ENCODE measurements at regions of chr2 and their contacts with region 1.

Region 1: GRCh38 chr2:241149925-241150659 is at the start of gene PPP1R7:
- DNase-seq: peak; percentile 94
- ATAC-seq: peak; percentile 87
- H3K4me3 ChIP-seq: peak within 1 kb of the TSS; percentile 83 to 96 (median 91)
- H3K27ac ChIP-seq: peak within 1 kb of the TSS; percentile 36
- H3K4me1 ChIP-seq: peaks cover 25% of the 10 kb centered on the region
- H3K27me3 ChIP-seq: no peaks in the 10 kb centered on the region; a peak in 1 of 5 replicates
- CTCF ChIP-seq: peak; percentile 70
- EP300 ChIP-seq: no peak; a peak in 1 of 4 replicates
- POLR2A ChIP-seq: peak; percentile 72 to 90
- RAD21 ChIP-seq: peak; percentile 84
- total RNA-seq, gene PPP1R7: 67.9 and 77.2 TPM in 2 replicates

Region 2: DNA sequence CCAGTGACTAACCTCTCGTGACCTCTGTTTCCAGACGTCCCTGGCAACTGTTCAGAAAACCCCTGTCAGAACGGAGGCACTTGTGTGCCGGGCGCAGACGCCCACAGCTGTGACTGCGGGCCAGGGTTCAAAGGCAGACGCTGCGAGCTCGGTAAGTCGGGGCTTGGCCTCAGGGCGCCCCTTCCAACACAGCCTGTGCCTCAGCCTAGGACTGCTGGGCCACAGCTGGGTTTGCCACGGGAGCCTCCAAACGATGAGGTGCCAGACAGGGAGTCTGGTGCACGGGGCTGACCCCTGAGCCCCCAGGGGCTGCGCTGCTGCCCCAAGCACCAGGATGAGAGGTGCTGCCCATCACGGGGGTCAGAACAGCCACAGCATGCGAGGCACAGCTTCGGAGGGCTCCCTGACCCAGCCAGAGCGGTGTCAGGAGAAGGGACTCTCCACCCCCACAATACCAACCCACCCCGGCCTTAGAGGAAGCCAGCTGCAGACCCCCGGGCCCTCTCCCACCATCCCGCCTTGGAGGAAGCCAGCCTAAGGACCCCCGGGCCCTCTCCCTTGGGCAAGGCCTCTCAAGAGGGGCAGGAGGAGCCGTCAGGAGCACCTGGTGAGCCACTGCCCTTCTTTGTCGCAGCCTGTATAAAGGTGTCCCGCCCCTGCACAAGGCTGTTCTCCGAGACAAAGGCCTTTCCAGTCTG is 68.3 kb before region 1 on chr2:
- CTCF ChIA-PET with region 1: interaction called, 9 read pairs
- POLR2A ChIA-PET with region 1: interaction called, 4 read pairs
- in situ Hi-C with region 1: no loop called
- intact Hi-C with region 1: loop called (anchors 1 kb)
- DNase-seq: no peak
- ATAC-seq: peak; percentile 59
- H3K4me3 ChIP-seq: peak overlapping the region in 1 of 3 experiments; percentile 49; a peak in 1 of 6 replicates
- H3K27ac ChIP-seq: no peak overlapping the region
- H3K4me1 ChIP-seq: peaks cover 28% of the 10 kb centered on the region
- H3K27me3 ChIP-seq: no peaks in the 10 kb centered on the region
- CTCF ChIP-seq: no peak
- EP300 ChIP-seq: no peak
- POLR2A ChIP-seq: no peak
- RAD21 ChIP-seq: no peak

Region 3: GRCh38 chr2:241092677-241093076 is 57.4 kb before region 1 on chr2:
- CTCF ChIA-PET with region 1: no interaction called
- POLR2A ChIA-PET with region 1: interaction called, 13 read pairs
- in situ Hi-C with region 1: no loop called
- intact Hi-C with region 1: loop called (anchors 1 kb)
- DNase-seq: no peak
- ATAC-seq: peak; percentile 27
- H3K4me3 ChIP-seq: peak overlapping the region in 2 of 3 experiments; percentile 12 to 57; a peak in 3 of 6 replicates
- H3K27ac ChIP-seq: peak overlapping the region; percentile 83
- H3K4me1 ChIP-seq: peaks cover 51% of the 10 kb centered on the region
- H3K27me3 ChIP-seq: no peaks in the 10 kb centered on the region
- CTCF ChIP-seq: no peak
- EP300 ChIP-seq: no peak
- POLR2A ChIP-seq: no peak
- RAD21 ChIP-seq: no peak

Region 4: DNA sequence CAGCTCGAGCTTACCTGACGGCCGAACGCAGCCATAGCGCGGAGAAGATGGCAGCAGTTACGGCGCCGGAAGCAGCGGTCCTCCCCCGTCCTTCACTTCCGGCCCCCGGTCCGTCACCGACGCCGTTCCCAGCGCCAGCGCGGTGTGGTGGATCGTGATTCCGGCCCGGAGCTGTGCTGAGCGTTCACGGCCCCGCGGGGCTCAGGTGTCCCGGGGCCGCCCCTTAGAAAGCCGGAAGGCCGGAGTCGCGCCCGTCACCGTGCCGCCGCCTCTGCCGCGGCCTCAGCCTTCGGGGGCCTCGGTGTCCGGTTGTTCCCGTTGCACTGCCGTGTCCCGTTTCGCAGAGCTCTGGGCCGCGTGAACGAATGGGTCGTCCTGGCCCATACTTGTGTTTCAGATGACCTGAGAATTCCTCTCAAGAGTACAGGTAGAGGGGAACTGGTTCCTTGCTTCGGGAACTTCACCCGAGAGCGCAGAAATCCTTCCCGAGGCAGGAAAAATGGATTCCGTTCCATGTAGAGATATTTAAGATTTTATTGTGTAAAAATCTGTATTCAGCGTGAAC is 47.8 kb before region 1 on chr2 and contains the start of gene MTERF4:
- CTCF ChIA-PET with region 1: no interaction called
- POLR2A ChIA-PET with region 1: interaction called, 21 read pairs
- in situ Hi-C with region 1: no loop called
- intact Hi-C with region 1: loop called (anchors 2 kb)
- DNase-seq: peak; percentile 86
- ATAC-seq: peak; percentile 99
- H3K4me3 ChIP-seq: peak within 1 kb of the TSS; percentile 75 to 96 (median 96)
- H3K27ac ChIP-seq: peak within 1 kb of the TSS; percentile 90
- H3K4me1 ChIP-seq: peaks cover 35% of the 10 kb centered on the region
- H3K27me3 ChIP-seq: no peaks in the 10 kb centered on the region; a peak in 1 of 5 replicates
- CTCF ChIP-seq: peak; percentile 55
- EP300 ChIP-seq: peak; percentile 77 to 81; a peak in 3 of 4 replicates
- POLR2A ChIP-seq: peak; percentile 91 to 96
- RAD21 ChIP-seq: peak; percentile 92
- total RNA-seq, gene MTERF4: 59.8 and 61.5 TPM in 2 replicates

Region 5: GRCh38 chr2:241135737-241136136 is 14.4 kb before region 1 on chr2:
- CTCF ChIA-PET with region 1: no interaction called
- POLR2A ChIA-PET with region 1: interaction called, 15 read pairs
- in situ Hi-C with region 1: no loop called
- intact Hi-C with region 1: no loop called
- DNase-seq: peak; percentile 48
- ATAC-seq: peak; percentile 88
- H3K4me3 ChIP-seq: no peak overlapping the region
- H3K27ac ChIP-seq: peak overlapping the region; percentile 44
- H3K4me1 ChIP-seq: peaks cover 22% of the 10 kb centered on the region
- H3K27me3 ChIP-seq: no peaks in the 10 kb centered on the region
- CTCF ChIP-seq: no peak
- EP300 ChIP-seq: 0 out of 4 replicates have a peak, but pooled peaks of 1 of the 2 experiments have one; percentile 36
- POLR2A ChIP-seq: no peak
- RAD21 ChIP-seq: no peak

Region 6: DNA sequence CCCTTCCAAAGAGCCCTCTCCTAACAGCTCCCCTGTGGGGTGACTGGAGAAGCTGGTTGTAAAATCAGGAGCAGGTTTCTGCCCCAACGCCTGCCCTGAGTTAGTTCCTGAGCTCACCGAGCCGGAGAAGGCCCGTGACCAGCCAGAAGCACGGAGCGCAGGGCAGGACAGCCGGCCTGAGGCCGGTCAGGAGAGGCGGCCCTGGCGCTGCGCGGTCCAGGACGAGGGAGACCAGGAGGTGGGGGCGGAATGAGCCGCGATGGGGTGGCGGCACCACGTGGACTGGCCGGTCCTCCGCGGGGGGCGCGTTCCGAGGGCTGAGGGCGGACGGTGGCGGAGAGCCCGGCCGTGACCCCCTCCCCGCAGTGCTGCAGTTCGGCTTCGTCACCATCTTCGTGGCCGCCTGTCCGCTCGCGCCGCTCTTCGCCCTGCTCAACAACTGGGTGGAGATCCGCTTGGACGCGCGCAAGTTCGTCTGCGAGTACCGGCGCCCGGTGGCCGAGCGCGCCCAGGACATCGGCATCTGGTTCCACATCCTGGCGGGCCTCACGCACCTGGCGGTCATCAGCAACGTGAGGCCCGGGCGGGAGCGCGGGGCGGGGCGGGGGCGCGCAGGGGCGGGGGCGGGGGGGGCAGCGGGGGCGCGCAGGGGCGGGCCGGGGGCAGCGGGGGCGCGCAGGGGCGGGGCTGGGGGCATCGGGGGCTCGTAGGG is 67.4 kb after region 1 on chr2:
- CTCF ChIA-PET with region 1: no interaction called
- POLR2A ChIA-PET with region 1: interaction called, 5 read pairs
- in situ Hi-C with region 1: no loop called
- intact Hi-C with region 1: loop called (anchors 1 kb)
- DNase-seq: peak; percentile 80
- ATAC-seq: peak; percentile 75
- H3K4me3 ChIP-seq: peak overlapping the region; percentile 50 to 76 (median 74)
- H3K27ac ChIP-seq: peak overlapping the region; percentile 79
- H3K4me1 ChIP-seq: peaks cover 64% of the 10 kb centered on the region
- H3K27me3 ChIP-seq: peaks cover 4 to 21% of the 10 kb centered on the region in 2 experiments; a peak in 3 of 5 replicates
- CTCF ChIP-seq: peak; percentile 56
- EP300 ChIP-seq: 0 out of 4 replicates have a peak, but pooled peaks of 1 of the 2 experiments have one; percentile 28
- POLR2A ChIP-seq: peak in 1 of 2 experiments; percentile 66; a peak in 2 of 4 replicates
- RAD21 ChIP-seq: peak; percentile 69